Prostate gland (tissue), 2 donors: ENCODE measurements at regions of chr1 and their contacts with region 1.

Region 1: DNA sequence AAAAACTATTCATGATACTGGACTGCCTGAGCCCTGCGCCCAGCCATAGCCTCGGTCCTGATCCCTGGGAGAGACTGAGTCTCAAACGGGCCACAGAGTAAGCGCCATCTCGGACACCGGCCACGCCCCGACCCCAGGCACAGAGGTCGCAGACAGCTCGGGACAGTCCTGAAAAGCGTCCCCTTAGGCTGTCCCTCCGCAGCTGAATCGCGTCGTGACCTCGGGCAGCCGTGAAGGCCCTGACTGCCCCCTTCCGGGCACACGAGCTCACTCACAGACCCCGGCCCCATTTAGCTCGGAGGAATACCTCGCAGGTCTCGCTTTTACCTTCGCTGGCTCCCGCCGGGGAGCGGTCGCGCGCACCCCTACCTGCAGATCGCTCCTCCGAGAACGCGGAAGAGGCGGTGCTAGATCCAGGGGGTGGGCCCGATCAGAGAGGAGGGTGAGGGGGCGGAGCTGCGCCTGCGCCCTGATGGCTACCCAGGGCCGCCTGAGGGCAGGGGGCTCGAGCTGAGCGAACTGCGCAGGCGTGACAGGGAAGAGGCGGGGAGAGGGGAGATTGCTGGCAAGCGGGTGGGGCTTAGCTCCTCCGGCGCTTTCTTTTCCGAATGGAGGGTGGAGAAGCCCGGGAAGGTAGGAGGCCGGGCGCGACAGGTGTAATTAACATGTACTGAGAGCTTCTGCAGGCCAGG is at the start of gene MKNK1:
- DNase-seq: peak; percentile 97
- H3K4me3 ChIP-seq: peak within 1 kb of the TSS; percentile 81 to 85
- H3K27ac ChIP-seq: peak within 1 kb of the TSS; percentile 75
- H3K4me1 ChIP-seq: peaks cover 6% of the 10 kb centered on the region
- H3K27me3 ChIP-seq: no peaks in the 10 kb centered on the region
- CTCF ChIP-seq: peak in 1 of 4 experiments; percentile 33
- POLR2A ChIP-seq: peak; percentile 98
- total RNA-seq, gene MKNK1: 28.1 to 37.8 TPM

Region 2: DNA sequence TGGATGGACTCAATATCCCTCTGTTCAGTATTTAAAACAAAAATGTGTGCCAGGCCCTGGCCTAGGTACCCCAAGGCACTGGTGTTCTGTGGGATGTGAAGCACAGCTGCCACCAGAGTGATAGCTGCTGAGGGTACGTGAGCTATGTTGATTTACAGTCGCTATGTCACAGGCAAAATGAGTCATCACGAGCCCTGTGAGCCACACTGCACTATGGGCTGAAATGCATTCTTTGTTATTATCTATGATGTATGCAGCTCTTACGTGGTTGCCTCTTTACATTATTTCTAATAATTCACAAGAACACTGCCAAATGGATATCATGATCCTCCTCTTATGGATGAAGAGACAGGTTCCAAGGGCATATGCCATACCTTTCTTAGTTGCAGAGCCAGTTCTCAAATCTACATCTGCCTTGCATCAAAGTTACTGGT is 69.8 kb after region 1 on chr1:
- intact Hi-C with region 1: loop called (anchors 5 kb)
- DNase-seq: no peak
- H3K4me3 ChIP-seq: no peak overlapping the region
- H3K27ac ChIP-seq: no peak overlapping the region
- H3K4me1 ChIP-seq: no peaks in the 10 kb centered on the region
- H3K27me3 ChIP-seq: no peaks in the 10 kb centered on the region
- CTCF ChIP-seq: no peak
- POLR2A ChIP-seq: no peak